AG04450 (cell line): ENCODE measurements at regions of chr7 and their contacts with region 1.

Region 1: DNA sequence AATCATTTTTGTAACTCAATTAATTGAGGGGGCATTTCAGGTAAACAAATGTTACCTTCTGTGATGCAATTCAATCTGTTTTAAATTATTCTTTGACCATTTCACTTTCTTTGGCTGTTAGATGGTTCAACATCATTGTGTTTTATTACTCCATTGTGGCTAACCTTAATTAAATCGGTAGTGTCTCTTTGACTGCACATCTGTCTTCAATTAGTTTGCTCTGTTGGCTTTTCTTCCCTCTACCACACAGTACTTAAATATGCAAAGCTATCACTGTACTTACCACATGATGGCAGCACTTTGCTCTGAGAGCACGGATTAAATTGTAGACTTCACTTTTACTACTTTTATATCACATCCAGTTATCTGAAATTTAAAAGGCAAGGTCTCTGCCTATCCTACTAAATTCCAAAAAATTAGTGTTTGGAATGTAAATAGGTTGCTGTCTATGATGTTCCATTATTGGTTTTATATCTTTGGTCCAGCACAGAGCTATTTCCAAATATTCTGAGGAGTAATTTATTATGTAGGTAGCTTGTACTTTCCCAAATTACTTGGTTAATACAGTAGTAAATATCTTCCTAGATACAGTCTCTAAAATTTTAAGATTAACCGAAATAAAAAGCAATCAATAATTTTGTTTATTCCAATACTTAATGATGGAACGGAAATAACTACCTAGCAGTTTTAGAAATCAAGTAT is 352.0 kb downstream of the PCLO start:
- DNase-seq: peak; percentile 62
- H3K4me3 ChIP-seq: no peak overlapping the region
- H3K27ac ChIP-seq: no peak overlapping the region
- H3K27me3 ChIP-seq: no peaks in the 10 kb centered on the region
- CTCF ChIP-seq: peak; percentile 80

Region 2: DNA sequence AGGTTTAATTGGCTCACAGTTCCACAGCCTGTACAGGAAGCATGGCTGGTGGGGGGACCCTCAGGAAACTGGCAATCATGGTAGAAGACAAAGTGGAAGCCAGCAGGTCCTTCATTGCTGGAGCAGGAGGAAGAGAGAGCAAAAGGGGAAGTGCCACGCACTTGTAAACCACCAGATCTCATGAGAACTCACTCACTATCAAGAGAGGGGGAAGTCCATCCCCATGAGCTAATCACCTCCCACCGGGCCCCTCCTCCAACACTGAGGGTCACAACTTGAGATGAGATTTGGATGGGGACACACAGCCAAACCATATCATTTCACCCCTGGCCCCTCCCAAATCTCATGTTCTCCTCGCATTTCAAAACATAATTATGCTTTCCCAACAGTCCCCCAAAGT is 195.2 kb before region 1 on chr7:
- CTCF ChIA-PET with region 1: no interaction called
- POLR2A ChIA-PET with region 1: no interaction called
- DNase-seq: no peak
- H3K4me3 ChIP-seq: no peak overlapping the region
- H3K27ac ChIP-seq: no peak overlapping the region
- H3K27me3 ChIP-seq: no peaks in the 10 kb centered on the region
- CTCF ChIP-seq: no peak

Region 3: GRCh38 chr7:82633592-82633991 is 177.1 kb before region 1 on chr7:
- CTCF ChIA-PET with region 1: no interaction called
- POLR2A ChIA-PET with region 1: no interaction called
- DNase-seq: no peak
- H3K4me3 ChIP-seq: no peak overlapping the region
- H3K27ac ChIP-seq: no peak overlapping the region
- H3K27me3 ChIP-seq: no peaks in the 10 kb centered on the region
- CTCF ChIP-seq: no peak

Region 4: DNA sequence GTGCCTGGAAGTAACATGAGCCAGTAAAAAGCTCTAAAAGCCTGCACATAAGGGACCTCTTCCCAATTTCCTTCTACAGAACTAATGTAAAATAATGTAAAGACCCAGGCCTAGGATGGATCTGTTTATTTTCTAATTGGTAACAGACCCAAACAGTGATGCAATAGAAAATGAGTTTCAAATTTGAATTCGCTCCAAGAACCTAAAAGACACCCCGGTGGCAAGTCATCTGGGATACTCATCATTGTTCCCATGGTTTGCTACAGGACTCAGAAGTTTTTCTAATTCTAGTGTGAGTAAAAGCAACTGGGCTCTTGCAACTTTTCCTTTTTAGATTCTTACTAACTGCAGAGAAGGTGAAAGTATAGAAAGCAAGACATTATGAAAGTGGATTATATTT is 95.8 kb before region 1 on chr7:
- CTCF ChIA-PET with region 1: no interaction called
- POLR2A ChIA-PET with region 1: no interaction called
- DNase-seq: no peak
- H3K4me3 ChIP-seq: no peak overlapping the region
- H3K27ac ChIP-seq: no peak overlapping the region
- H3K27me3 ChIP-seq: no peaks in the 10 kb centered on the region
- CTCF ChIP-seq: no peak

Region 5: DNA sequence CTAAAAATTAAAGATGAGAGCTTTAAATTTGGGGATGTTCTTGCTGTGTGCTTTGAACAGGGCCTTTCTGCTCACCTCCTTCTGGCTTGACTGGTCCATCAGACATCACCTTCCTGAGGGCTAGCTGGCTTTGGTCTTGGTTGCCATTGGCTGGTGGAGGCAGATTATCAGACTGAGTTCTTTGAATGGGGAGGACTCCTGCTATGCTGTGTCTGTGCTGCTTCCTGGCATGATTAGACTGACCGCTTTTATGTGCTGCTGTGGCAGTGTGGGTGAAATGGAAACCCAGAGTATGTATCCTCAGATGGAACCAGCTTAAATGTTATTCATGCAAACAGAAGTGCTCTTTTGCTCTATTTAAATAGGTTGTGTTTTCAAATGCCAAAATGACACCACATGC is 10.3 kb after region 1 on chr7:
- CTCF ChIA-PET with region 1: interaction called, 15 read pairs
- POLR2A ChIA-PET with region 1: no interaction called
- DNase-seq: no peak
- H3K4me3 ChIP-seq: no peak overlapping the region
- H3K27ac ChIP-seq: no peak overlapping the region
- H3K27me3 ChIP-seq: no peaks in the 10 kb centered on the region
- CTCF ChIP-seq: no peak

Region 6: DNA sequence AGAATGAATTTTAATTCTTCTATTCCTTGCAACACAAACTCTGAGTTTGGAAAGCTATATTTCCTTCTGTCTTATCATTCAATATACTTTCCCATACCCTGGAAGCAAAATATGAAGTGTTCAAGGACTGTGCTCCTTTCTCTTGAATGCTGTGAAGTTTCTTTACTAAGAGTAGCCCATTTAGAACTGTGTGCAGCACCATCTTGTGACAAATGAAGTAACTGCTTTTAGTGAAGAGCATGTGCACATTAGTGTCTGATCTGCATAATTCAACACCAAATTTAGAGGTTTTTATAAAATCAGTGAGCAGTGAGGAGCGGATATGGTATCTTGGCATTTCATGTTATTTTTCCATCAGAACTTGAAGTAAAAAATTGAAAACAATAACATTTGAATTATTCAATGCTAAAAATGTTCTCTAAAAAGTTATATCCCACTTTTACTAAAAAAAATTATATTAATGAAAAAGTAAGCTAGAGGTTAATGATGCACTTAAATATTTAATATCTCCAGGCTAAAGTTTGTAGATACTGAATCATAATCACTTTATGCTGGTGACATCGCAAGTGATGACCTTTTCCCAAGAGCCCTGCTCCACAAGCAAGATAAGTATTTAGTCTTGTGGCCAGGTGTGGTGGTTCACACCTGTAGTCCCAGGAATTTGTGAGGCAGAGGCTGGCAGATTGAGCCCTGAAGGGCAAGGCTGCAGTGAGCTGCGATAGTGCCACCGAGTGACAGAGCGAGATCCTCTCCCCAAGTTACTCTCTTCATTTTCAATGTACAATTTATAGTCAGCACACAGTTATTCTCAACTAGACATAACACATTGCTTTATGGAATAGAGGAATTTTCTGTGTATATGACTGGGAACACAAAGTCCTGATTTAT is 460.7 kb after region 1 on chr7:
- CTCF ChIA-PET with region 1: interaction called, 28 read pairs
- POLR2A ChIA-PET with region 1: no interaction called
- DNase-seq: peak; percentile 1
- H3K4me3 ChIP-seq: no peak overlapping the region
- H3K27ac ChIP-seq: no peak overlapping the region
- H3K27me3 ChIP-seq: no peaks in the 10 kb centered on the region
- CTCF ChIP-seq: peak; percentile 44